HEK293 (cell line): ENCODE measurements at regions of chr19 and their contacts with region 1.

Region 1: DNA sequence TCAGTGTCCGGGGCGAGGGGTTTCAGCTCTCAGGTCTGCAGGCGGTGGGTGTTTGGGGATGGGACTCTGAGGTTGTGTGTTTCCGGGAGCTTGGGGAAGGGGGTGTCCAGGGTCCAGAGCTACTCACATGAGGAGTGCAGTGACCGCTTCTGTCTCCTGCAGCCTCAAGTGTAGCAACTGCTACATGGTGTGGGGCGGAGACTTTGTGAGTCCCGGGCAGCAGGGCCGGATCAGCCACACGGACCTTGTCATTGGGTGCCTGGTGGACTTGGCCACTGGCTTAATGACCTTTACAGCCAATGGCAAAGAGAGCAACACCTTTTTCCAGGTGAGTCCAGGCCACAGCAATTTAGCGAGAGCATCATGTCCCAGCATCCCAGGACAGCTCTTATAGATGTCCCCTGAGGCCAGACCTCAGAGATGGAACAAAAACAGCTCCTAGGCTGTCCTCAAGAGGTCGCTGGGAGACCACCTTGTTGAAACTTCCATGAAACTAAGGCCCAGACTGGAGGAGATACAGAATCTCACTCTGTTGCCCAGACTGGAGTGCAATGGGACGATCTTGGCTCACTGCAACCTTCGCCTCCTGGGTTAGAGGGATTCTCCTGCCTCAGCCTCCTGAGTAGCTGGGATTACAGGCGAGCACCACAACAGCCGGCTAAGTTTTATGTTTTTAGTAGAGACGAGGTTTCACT is 44.9 kb downstream of the RYR1 start:
- H3K4me3 ChIP-seq: no peak overlapping the region
- H3K27ac ChIP-seq: no peak overlapping the region
- H3K4me1 ChIP-seq: no peaks in the 10 kb centered on the region
- CTCF ChIP-seq: peak; percentile 77

Region 2: DNA sequence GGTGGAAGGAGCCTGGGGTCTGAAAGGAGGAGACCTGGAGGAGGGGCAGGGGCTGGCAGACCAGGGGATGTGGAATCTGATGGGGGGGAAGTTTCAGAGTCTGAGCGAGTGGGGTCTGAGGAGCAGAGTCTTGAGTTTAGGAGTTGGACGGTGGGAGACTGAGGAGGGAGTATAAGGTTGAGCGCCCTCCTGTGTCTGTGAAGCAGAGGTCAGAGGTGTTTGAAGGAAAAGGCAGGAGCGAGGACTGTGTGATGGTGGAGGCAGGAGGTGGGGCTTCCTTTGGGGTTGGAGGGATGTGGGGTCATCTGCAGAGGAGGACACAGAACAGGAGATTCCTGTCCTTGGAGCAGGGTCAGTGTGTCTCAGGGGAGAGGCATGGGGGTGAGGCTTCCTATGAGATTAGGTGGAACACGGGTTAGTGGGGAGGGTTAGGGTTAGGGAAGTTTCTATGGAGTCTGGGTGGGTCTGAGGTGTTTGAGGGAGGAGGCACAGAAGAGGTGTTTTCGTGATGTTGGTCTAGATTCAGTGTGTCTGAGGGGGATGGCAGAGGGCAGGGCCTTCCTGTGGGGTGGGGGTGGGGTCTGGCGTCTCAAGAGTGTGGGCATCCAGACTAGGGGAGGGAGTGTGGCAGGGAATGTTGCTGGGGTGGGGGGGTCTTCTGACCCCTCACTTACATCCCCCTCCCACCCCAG is 36.6 kb before region 1 on chr19:
- CTCF ChIA-PET with region 1: no interaction called
- POLR2A ChIA-PET with region 1: no interaction called
- H3K4me3 ChIP-seq: no peak overlapping the region
- H3K27ac ChIP-seq: no peak overlapping the region
- H3K4me1 ChIP-seq: no peaks in the 10 kb centered on the region
- CTCF ChIP-seq: peak; percentile 74

Region 3: GRCh38 chr19:38496603-38497487 is 18.4 kb after region 1 on chr19:
- CTCF ChIA-PET with region 1: interaction called, 20 read pairs
- POLR2A ChIA-PET with region 1: interaction called, 4 read pairs
- H3K4me3 ChIP-seq: no peak overlapping the region
- H3K27ac ChIP-seq: no peak overlapping the region
- H3K4me1 ChIP-seq: no peaks in the 10 kb centered on the region
- CTCF ChIP-seq: no peak

Region 4: GRCh38 chr19:38508507-38508906 is 30.1 kb after region 1 on chr19:
- CTCF ChIA-PET with region 1: interaction called, 12 read pairs
- POLR2A ChIA-PET with region 1: no interaction called
- H3K4me3 ChIP-seq: no peak overlapping the region
- H3K27ac ChIP-seq: no peak overlapping the region
- H3K4me1 ChIP-seq: no peaks in the 10 kb centered on the region
- CTCF ChIP-seq: no peak